Esophagus squamous epithelium (tissue), 5 donors: ENCODE measurements at regions of chr1 and their contacts with region 1.

Region 1: GRCh38 chr1:61043010-61043820 is 39.1 kb upstream of the NFIA start:
- DNase-seq: no peak
- H3K4me3 ChIP-seq: peak overlapping the region; percentile 61 to 74 (median 62)
- H3K27ac ChIP-seq: peak overlapping the region; percentile 85 to 87 (median 86)
- H3K4me1 ChIP-seq: peaks cover 0 to 16% (median 0%) of the 10 kb centered on the region in 3 donors
- H3K27me3 ChIP-seq: no peaks in the 10 kb centered on the region
- CTCF ChIP-seq: peak; percentile 73 to 94 (median 88)
- POLR2A ChIP-seq: no peak

Region 2: DNA sequence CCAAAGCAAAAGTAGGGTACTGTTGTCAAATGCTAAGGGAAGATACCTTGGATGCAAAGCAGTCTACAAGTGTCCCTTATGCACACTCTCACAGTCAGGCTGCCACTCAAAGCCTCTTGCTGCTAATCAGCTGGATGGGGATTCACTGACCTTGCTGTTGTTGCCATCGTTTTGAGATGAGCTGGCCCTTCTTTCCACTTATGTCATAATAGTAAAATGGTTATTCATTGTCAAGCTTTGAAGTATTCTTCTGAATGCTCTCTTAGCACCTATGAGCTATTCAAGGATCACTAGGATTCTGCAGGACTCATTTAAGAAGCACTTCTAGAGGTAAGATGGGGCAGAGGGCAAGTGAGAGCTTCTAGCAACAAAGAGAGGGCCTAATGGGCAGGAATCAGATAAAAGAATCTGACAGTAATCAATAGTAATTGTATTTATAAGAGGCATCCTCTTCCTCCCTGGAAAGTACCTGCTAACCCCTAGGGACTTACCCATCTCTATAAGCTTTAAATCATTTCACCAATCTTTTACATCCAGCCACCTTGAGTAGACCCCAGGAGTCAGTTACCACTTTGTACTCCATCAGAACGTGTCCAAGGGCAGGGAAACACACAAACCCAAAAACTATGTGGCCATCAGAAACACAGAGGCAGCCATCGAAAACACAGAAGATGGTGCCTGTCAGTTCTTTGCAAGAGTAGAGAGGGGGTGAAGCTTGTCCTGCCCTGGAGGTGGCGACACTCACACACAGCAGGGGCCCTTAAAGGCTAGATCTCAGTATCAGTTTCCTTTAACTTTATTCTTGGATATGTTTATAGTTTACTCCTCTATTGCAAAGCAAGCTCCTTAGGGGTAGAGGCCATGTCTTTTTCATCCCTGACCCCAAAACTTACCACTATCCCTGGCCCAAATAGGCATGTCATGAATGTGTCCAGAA is 64.5 kb before region 1 on chr1:
- intact Hi-C with region 1: loop called (anchors 5 kb)
- DNase-seq: no peak
- H3K4me3 ChIP-seq: no peak overlapping the region
- H3K27ac ChIP-seq: no peak overlapping the region
- H3K4me1 ChIP-seq: peaks cover 0 to 12% (median 6%) of the 10 kb centered on the region in 3 donors
- H3K27me3 ChIP-seq: peaks cover 0 to 4% (median 0%) of the 10 kb centered on the region in 4 donors
- CTCF ChIP-seq: peak; percentile 30 to 84 (median 60)
- POLR2A ChIP-seq: no peak

Region 3: DNA sequence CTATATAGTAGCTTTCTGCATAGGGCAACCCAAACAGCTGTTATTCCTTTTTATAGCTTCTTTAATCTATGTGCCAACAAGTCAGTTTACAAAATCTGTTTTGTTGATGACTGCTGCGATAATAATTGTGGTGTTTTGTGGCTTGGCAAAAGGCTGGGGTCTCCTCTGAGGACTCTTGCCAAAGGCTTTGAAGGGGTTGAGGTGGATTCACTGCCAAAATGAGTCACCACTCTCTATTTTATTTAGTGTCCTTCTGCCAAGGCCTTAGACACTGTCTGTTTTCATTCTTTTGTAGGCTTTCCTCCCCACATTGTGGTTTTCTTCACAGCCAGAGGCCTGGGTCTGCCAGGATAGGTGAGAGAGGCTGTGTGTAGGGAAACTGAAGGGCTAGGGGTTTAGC is 200.9 kb after region 1 on chr1:
- intact Hi-C with region 1: no loop called
- DNase-seq: no peak
- H3K4me3 ChIP-seq: no peak overlapping the region
- H3K27ac ChIP-seq: peak overlapping the region in 3 of 4 donors; percentile 53 to 65 (median 64)
- H3K4me1 ChIP-seq: peaks cover 9 to 57% (median 18%) of the 10 kb centered on the region in 3 donors
- H3K27me3 ChIP-seq: no peaks in the 10 kb centered on the region
- CTCF ChIP-seq: no peak
- POLR2A ChIP-seq: no peak